ENCODE measurements at regions of chr17 and their contacts with region 1.

Region 1: DNA sequence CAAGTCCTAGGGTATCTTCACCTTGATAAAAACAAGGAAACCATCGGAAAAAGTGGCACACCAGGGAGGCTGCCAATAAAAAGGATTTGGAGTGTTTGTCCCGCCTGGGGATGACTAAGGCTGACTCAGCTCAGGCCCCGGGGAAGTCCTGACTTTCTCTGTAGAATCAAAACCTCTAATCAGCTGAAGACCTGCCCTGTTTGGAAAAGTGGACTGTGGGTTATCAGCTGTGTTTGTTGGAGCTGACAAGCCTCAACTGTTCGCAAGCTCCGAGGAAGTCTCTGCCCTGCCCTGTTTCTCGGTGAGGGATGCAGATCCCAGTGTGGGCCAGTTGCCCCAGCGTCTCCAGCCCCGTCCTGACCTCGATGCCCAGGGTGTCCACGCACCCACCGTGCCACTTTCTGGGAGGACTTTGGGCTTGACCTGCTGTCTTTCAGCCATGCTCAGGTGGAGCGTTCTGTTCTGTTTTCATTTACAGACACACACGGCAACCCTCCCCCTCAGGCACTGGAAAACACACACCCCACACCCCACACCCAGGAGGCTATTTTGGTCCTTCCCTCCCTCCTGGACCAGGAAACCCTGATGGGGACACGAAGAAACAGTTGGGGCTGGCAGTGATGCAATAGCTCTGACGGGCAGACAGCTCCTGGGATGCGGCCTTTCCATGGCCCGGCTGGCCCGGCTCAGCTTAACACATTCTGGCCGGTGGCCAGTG is 27.6 kb upstream of the PITPNA start:
- DNase-seq: peak; percentile 67 to 70
- ATAC-seq: peak; percentile 48 to 96 (median 86)
- H3K4me3 ChIP-seq: no peak overlapping the region
- H3K27ac ChIP-seq: peak overlapping the region; percentile 65 to 91 (median 80)
- H3K4me1 ChIP-seq: peaks cover 0 to 66% (median 25%) of the 10 kb centered on the region in 9 donors
- H3K27me3 ChIP-seq: no peaks in the 10 kb centered on the region
- CTCF ChIP-seq: no peak

Region 2: GRCh38 chr17:1628856-1629646 is 38.9 kb after region 1 on chr17:
- intact Hi-C with region 1: loop called in 1 of 10 experiments (anchors 5 kb)
- DNase-seq: peak; percentile 92 to 95
- ATAC-seq: peak; percentile 84 to 92 (median 90)
- H3K4me3 ChIP-seq: peak overlapping the region; percentile 73 to 93 (median 80)
- H3K27ac ChIP-seq: peak overlapping the region; percentile 68 to 99 (median 92)
- H3K4me1 ChIP-seq: peaks cover 3 to 54% (median 21%) of the 10 kb centered on the region in 9 donors
- H3K27me3 ChIP-seq: no peaks in the 10 kb centered on the region
- CTCF ChIP-seq: peak in 8 of 9 donors; percentile 35 to 73 (median 48)

Measured in heart right ventricle (tissue), 16 donors.